Posterior cingulate gyrus (tissue), 11 donors: ENCODE measurements at regions of chr11 and their contacts with region 1.

Region 1: GRCh38 chr11:112770487-112770886 is 190.7 kb upstream of the NCAM1 start:
- DNase-seq: peak; percentile 70 to 97 (median 84)

Region 2: GRCh38 chr11:112610996-112611750 is 159.3 kb before region 1 on chr11:
- intact Hi-C with region 1: no loop called
- DNase-seq: no peak

Region 3: GRCh38 chr11:112655371-112655770 is 115.1 kb before region 1 on chr11:
- intact Hi-C with region 1: loop called (anchors 5 kb)
- DNase-seq: peak; percentile 41 to 95 (median 74)